Activated naive CD4-positive, alpha-beta T cell treated with anti-CD3 and anti-CD28 coated beads for 36 hours (primary cell): ENCODE measurements at regions of chr12 and their contacts with region 1.

Region 1: DNA sequence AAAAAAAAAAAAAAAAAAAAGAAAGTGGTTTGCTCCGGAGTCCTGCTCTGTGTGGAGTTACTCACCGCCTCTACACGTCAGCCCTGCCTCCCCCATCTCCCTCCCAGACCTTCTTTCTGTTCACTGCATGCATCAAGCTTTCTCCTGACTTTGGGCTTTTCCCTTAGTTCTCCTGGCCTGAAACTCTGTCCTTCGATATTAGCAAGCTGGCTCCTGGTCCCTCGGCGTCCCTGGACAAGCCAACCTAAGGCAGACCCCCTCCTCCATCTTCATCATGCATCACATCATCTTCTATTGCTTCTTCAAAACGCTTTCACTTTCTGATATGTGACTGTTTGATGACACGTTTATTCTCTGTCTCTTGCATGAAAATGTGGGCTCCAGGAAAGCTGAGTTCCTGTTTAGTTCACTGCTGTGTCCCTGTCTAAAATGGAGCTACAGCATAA is 40.6 kb downstream of the SLC15A4 start:
- DNase-seq: peak; percentile 51
- H3K4me3 Mint-ChIP-seq: peak overlapping the region; percentile 60
- H3K27ac Mint-ChIP-seq: peak overlapping the region; percentile 89
- H3K4me1 Mint-ChIP-seq: peaks cover 14% of the 10 kb centered on the region
- H3K27me3 Mint-ChIP-seq: peaks cover 3% of the 10 kb centered on the region

Region 2: GRCh38 chr12:128823916-128824839 is 41.0 kb after region 1 on chr12 and contains the start of gene SLC15A4:
- CTCF ChIA-PET with region 1: interaction called, 5 read pairs
- intact Hi-C with region 1: loop called (anchors 1 kb)
- DNase-seq: peak; percentile 96
- H3K4me3 Mint-ChIP-seq: peak within 1 kb of the TSS; percentile 79
- H3K27ac Mint-ChIP-seq: no peak within 1 kb of the TSS
- H3K4me1 Mint-ChIP-seq: peaks cover 30% of the 10 kb centered on the region
- H3K27me3 Mint-ChIP-seq: peaks cover 11% of the 10 kb centered on the region
- total RNA-seq, gene SLC15A4: 10.1 to 10.3 TPM

Region 3: GRCh38 chr12:128914908-128915563 is 131.9 kb after region 1 on chr12:
- CTCF ChIA-PET with region 1: no interaction called
- intact Hi-C with region 1: loop called (anchors 1 kb)
- DNase-seq: peak; percentile 78
- H3K4me3 Mint-ChIP-seq: no peak overlapping the region
- H3K27ac Mint-ChIP-seq: peak overlapping the region; percentile 14
- H3K4me1 Mint-ChIP-seq: peaks cover 30% of the 10 kb centered on the region
- H3K27me3 Mint-ChIP-seq: no peaks in the 10 kb centered on the region

Region 4: DNA sequence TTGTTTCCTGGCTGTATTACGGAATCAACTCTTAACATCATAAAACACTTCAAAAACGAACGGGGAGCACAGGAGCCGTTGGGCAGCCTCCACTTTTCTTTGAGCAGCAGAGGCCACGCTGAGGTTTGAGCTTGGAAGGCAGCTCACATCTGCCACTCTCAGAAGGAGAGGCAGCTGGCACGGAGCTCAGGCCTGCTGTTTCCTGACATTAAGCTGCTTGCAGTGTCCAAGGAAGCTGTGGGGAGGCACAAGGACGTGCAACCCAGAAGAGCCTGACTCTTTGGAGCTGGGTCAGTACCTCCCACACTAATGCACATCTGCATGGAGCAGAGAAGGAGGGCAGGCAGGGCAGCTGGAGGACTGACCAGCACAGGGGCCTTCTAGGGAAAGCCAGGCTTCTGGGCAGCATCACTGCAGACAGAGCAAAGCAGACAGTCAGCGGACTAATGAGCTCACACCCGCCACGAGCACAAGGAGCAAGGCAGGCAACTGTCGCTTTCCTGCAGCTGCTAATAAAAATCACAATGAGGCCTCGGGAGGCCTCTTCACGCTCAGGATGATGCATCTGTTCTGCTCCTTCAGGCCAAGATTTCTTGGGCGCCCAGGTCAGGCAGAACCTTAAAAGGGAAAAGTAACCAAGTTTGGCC is 281.2 kb after region 1 on chr12:
- CTCF ChIA-PET with region 1: no interaction called
- intact Hi-C with region 1: no loop called
- DNase-seq: no peak
- H3K4me3 Mint-ChIP-seq: no peak overlapping the region
- H3K27ac Mint-ChIP-seq: no peak overlapping the region
- H3K4me1 Mint-ChIP-seq: no peaks in the 10 kb centered on the region
- H3K27me3 Mint-ChIP-seq: peaks cover 8% of the 10 kb centered on the region

Region 5: DNA sequence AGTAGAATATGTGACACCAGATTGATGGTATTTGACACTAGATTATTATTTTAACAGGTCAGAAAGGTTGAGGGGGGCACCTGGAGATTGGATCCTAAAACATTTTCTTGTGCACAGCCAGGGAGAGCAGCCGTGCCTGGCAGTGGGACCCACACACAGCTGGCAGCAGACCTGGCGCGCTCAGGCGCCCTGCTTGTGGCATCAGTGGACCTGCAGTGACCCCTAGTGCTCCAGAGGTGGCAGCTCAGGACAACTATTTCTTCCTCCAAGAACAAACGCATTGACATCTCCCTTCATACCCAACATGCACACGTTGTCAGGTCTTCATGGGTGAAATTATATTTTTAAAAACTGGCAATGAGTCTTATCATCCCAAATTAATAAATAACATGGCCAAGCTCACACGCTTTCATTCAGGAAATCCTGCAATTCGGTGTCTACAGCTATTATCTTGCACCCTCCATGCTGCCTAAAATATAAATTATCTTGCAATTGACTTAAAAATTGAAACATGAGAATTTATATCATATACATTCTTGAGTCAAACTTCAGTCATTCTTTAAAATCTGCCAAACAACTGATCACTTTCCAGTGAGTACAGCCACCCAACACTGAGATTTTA is 1128.4 kb after region 1 on chr12:
- CTCF ChIA-PET with region 1: no interaction called
- intact Hi-C with region 1: loop called (anchors 2 kb)
- DNase-seq: peak; percentile 54
- H3K4me3 Mint-ChIP-seq: no peak overlapping the region
- H3K27ac Mint-ChIP-seq: no peak overlapping the region
- H3K4me1 Mint-ChIP-seq: no peaks in the 10 kb centered on the region
- H3K27me3 Mint-ChIP-seq: peaks cover 14% of the 10 kb centered on the region